Activated CD4-positive, alpha-beta memory T cell treated with anti-CD3 and anti-CD28 coated beads, Interleukin-2, amount 10 ng/mL, durations not matched to agents 7 days and 5 days (primary cell): ENCODE measurements at regions of chr15 and their contacts with region 1.

Region 1: DNA sequence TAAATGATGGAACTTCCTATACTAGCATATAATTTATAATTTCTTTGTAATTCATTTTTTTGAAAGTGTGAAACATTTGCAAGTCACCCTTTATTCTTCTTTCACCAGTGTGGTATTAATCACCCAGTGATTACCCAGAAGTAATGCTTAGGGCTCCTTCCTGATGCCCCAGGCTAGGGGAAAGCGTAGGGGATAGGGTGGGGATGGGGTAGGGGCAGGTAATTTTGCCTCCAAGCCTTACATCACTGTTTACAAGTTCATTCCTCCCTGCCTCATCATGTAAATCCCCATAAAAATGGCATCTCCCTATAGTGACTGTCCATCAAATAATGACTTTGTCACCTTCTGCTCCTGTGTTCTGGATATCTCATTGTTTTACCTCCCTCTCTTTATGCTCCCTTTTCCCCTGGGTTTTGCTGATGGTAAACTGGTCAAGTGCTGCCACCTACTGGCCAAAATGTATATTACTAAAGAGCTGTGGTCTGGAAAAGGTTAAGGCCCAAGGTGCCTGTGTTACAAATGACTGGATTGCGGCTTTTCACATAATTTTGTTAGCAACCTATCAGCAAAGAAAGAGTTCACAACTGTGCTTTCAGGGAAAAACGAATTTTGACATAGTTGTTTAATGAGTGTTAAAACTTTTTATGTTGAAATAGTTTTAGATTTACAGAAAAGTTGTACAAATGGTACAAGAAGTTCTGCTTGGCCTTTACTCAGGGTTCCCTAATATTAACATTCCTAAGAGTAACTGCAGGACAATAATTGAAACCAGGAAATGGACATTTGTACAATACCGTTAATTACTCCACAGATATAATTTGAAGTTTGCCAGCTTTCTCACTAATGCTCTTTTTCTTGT is 54.7 kb downstream of the ONECUT1 start:
- DNase-seq: peak; percentile 75
- H3K4me3 Mint-ChIP-seq: no peak overlapping the region
- H3K27ac Mint-ChIP-seq: no peak overlapping the region
- H3K4me1 Mint-ChIP-seq: peaks cover 36% of the 10 kb centered on the region
- H3K27me3 Mint-ChIP-seq: peaks cover 15% of the 10 kb centered on the region

Region 2: GRCh38 chr15:52261498-52262242 is 473.8 kb before region 1 on chr15:
- CTCF ChIA-PET with region 1: interaction called, 145 read pairs
- POLR2A ChIA-PET with region 1: interaction called, 16 read pairs
- DNase-seq: peak; percentile 82
- H3K4me3 Mint-ChIP-seq: no peak overlapping the region
- H3K27ac Mint-ChIP-seq: peak overlapping the region; percentile 89
- H3K4me1 Mint-ChIP-seq: peaks cover 60% of the 10 kb centered on the region
- H3K27me3 Mint-ChIP-seq: no peaks in the 10 kb centered on the region

Region 3: GRCh38 chr15:52331490-52332240 is 403.8 kb before region 1 on chr15:
- CTCF ChIA-PET with region 1: interaction called, 31 read pairs
- POLR2A ChIA-PET with region 1: interaction called, 5 read pairs
- DNase-seq: peak; percentile 78
- H3K4me3 Mint-ChIP-seq: peak overlapping the region; percentile 19
- H3K27ac Mint-ChIP-seq: peak overlapping the region; percentile 79
- H3K4me1 Mint-ChIP-seq: peaks cover 45% of the 10 kb centered on the region
- H3K27me3 Mint-ChIP-seq: no peaks in the 10 kb centered on the region

Region 4: GRCh38 chr15:52337198-52337853 is 398.1 kb before region 1 on chr15:
- CTCF ChIA-PET with region 1: interaction called, 31 read pairs
- POLR2A ChIA-PET with region 1: interaction called, 4 read pairs
- DNase-seq: no peak
- H3K4me3 Mint-ChIP-seq: no peak overlapping the region
- H3K27ac Mint-ChIP-seq: peak overlapping the region; percentile 9
- H3K4me1 Mint-ChIP-seq: peaks cover 30% of the 10 kb centered on the region
- H3K27me3 Mint-ChIP-seq: no peaks in the 10 kb centered on the region